T-cell (primary cell): ENCODE measurements at regions of chr14 and their contacts with region 1.

Region 1: DNA sequence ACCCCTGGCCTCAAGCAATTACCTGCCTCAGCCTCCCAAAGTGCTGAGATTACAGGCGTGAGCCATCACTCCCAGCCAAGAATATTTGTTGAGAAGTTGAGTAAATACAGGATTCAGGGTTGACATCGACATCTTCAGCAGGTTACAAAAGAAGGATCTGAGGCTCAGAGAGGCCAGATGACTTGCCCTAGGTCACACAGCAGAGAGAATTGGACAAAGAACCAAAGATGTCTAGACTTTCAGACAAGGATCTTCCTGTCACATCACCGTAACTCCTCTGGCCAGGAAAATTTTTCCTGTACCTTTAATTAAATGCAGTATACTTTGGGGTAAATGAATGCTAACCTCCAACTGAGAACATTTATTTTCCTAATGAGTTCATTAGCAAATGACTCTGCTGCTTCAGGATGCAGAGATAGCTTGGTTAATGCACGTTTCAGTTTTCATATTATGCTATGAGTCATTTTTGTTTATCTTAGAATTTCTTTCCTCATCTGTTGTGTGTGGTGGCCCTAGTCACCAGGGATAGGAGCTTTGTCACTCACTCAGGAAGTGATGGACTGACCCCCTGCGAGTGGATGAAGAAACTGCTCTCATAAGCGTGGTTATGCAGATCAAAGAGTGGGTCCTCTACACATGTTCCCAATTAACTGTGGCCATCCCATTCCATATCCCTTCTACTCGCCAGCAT is 9.0 kb downstream of the TC2N start:
- DNase-seq: no peak
- ATAC-seq: peak in 3 of 4 experiments; percentile 39 to 43 (median 42)
- H3K4me3 ChIP-seq: no peak overlapping the region
- H3K4me3 Mint-ChIP-seq: peak overlapping the region in 2 of 3 donors; percentile 3 to 86
- H3K27ac ChIP-seq: peak overlapping the region; percentile 43
- H3K27ac Mint-ChIP-seq: peak overlapping the region; percentile 73 to 92
- H3K4me1 ChIP-seq: peaks cover 64 to 89% of the 10 kb centered on the region in 2 experiments
- H3K4me1 Mint-ChIP-seq: peaks cover 93 to 96% (median 95%) of the 10 kb centered on the region in 3 donors
- H3K27me3 ChIP-seq: no peaks in the 10 kb centered on the region
- H3K27me3 Mint-ChIP-seq: no peaks in the 10 kb centered on the region

Region 2: DNA sequence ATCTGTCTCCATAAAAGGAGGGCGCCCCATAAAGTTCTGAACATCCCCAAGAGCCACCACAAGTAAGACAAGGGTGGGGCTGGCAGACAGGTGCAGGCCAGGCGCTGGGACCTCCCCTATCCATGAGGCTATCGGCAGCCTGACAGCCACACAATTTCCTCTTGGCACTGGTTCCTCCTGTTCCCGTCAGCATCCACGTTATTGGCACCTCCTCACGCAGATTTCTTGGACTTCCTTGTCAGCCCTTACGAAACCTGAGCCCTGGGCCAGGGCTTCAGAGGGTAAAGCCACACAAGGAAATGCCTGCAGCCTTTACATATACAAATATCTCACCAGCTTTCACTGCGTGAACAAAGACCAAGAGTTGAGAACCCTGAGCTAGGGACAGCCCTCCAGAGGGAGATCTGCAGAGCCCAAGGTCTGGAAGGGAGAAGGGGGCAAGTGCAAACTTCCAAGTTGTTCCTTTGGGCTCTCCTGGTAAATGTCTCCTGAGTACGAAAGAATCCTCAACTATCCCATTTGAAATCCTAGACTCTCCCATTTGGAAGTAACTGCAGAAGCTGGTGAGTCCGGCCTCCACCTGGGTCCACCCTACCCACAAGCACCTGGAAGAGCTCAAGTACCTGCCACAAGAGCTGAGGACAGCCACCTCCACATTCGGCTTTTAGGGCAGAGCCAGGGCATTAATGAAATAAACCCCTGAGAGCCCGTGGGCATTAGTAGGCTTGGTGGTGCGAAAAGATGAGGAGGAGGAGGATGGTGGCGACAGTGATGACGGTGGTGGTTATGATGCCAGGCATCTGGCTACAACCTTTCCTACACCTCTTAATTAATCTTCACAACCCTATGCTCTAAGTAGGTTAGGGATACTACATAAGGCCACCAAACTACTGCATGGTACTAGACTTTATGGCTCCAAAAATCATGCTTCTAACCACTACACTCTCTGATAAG is 14.4 kb after region 1 on chr14:
- CTCF ChIA-PET with region 1: interaction called in 1 of 2 experiments, 3 read pairs
- POLR2A ChIA-PET with region 1: interaction called, 4 to 15 read pairs
- DNase-seq: peak; percentile 42 to 86 (median 70)
- ATAC-seq: peak; percentile 51 to 57 (median 54)
- H3K4me3 ChIP-seq: peak overlapping the region; percentile 44 to 60
- H3K4me3 Mint-ChIP-seq: peak overlapping the region; percentile 82 to 89 (median 86)
- H3K27ac ChIP-seq: peak overlapping the region; percentile 90
- H3K27ac Mint-ChIP-seq: peak overlapping the region; percentile 100
- H3K4me1 ChIP-seq: peaks cover 75 to 96% of the 10 kb centered on the region in 2 experiments
- H3K4me1 Mint-ChIP-seq: peaks cover 98% of the 10 kb centered on the region in 3 donors
- H3K27me3 ChIP-seq: no peaks in the 10 kb centered on the region
- H3K27me3 Mint-ChIP-seq: no peaks in the 10 kb centered on the region

Region 3: GRCh38 chr14:91975763-91976162 is 117.4 kb after region 1 on chr14:
- CTCF ChIA-PET with region 1: no interaction called
- POLR2A ChIA-PET with region 1: interaction called in 1 of 2 experiments, 14 read pairs
- DNase-seq: no peak
- ATAC-seq: no peak
- H3K4me3 ChIP-seq: no peak overlapping the region
- H3K4me3 Mint-ChIP-seq: no peak overlapping the region
- H3K27ac ChIP-seq: no peak overlapping the region
- H3K27ac Mint-ChIP-seq: no peak overlapping the region
- H3K4me1 ChIP-seq: no peaks in the 10 kb centered on the region
- H3K4me1 Mint-ChIP-seq: peaks cover 7 to 18% (median 9%) of the 10 kb centered on the region in 3 donors
- H3K27me3 ChIP-seq: no peaks in the 10 kb centered on the region
- H3K27me3 Mint-ChIP-seq: no peaks in the 10 kb centered on the region

Region 4: GRCh38 chr14:92039719-92040430 is 181.5 kb after region 1 on chr14 and contains the start of gene TRIP11:
- CTCF ChIA-PET with region 1: no interaction called
- POLR2A ChIA-PET with region 1: no interaction called
- DNase-seq: peak; percentile 84 to 96 (median 93)
- ATAC-seq: peak; percentile 91 to 97 (median 96)
- H3K4me3 ChIP-seq: peak within 1 kb of the TSS; percentile 73 to 84
- H3K4me3 Mint-ChIP-seq: peak within 1 kb of the TSS; percentile 97 to 100 (median 98)
- H3K27ac ChIP-seq: peak within 1 kb of the TSS; percentile 90
- H3K27ac Mint-ChIP-seq: peak within 1 kb of the TSS; percentile 97
- H3K4me1 ChIP-seq: peaks cover 22 to 26% of the 10 kb centered on the region in 2 experiments
- H3K4me1 Mint-ChIP-seq: peaks cover 44 to 57% (median 53%) of the 10 kb centered on the region in 3 donors
- H3K27me3 ChIP-seq: no peaks in the 10 kb centered on the region
- H3K27me3 Mint-ChIP-seq: no peaks in the 10 kb centered on the region
- total RNA-seq, gene TRIP11: 52.7 to 58.3 (median 54.8) TPM